ENCODE measurements at regions of chr13 and their contacts with region 1.

Region 1: GRCh38 chr13:75482070-75482819 is at the start of gene TBC1D4:
- DNase-seq: peak; percentile 89 to 91 (median 90)
- ATAC-seq: peak; percentile 89 to 95 (median 90)
- H3K4me3 ChIP-seq: peak within 1 kb of the TSS; percentile 92 to 93 (median 92)
- H3K27ac ChIP-seq: peak within 1 kb of the TSS; percentile 43 to 79 (median 78)
- H3K4me1 ChIP-seq: peaks cover 0 to 14% (median 0%) of the 10 kb centered on the region in 4 donors
- H3K27me3 ChIP-seq: no peaks in the 10 kb centered on the region
- CTCF ChIP-seq: peak; percentile 71 to 88 (median 84)
- POLR2A ChIP-seq: peak; percentile 49
- total RNA-seq, gene TBC1D4: 7.7 to 18.6 (median 10.3) TPM

Region 2: DNA sequence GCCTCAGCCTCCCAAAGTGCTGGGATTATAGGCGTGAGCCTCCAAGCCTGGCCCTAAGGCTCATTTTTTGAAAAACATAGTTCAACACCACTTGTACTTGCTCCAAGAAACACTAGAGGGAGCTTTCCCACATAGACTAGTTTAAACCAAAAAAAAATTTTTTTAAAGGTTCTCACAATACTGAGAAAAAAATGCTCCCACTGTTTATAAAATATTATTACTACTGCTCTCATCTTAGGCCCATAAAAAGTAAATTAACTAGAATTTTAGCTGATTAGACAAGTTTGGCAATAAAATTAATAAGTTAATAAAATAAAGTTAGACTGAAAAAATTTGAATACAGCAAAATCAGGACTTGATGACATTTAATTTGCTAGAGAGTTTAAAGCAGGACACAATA is 109.7 kb before region 1 on chr13:
- intact Hi-C with region 1: loop called (anchors 10 kb)
- DNase-seq: no peak
- ATAC-seq: peak; percentile 79 to 81 (median 80)
- H3K4me3 ChIP-seq: no peak overlapping the region
- H3K27ac ChIP-seq: no peak overlapping the region
- H3K4me1 ChIP-seq: peaks cover 0 to 10% (median 3%) of the 10 kb centered on the region in 4 donors
- H3K27me3 ChIP-seq: no peaks in the 10 kb centered on the region
- CTCF ChIP-seq: peak; percentile 70 to 73 (median 72)
- POLR2A ChIP-seq: no peak

Region 3: DNA sequence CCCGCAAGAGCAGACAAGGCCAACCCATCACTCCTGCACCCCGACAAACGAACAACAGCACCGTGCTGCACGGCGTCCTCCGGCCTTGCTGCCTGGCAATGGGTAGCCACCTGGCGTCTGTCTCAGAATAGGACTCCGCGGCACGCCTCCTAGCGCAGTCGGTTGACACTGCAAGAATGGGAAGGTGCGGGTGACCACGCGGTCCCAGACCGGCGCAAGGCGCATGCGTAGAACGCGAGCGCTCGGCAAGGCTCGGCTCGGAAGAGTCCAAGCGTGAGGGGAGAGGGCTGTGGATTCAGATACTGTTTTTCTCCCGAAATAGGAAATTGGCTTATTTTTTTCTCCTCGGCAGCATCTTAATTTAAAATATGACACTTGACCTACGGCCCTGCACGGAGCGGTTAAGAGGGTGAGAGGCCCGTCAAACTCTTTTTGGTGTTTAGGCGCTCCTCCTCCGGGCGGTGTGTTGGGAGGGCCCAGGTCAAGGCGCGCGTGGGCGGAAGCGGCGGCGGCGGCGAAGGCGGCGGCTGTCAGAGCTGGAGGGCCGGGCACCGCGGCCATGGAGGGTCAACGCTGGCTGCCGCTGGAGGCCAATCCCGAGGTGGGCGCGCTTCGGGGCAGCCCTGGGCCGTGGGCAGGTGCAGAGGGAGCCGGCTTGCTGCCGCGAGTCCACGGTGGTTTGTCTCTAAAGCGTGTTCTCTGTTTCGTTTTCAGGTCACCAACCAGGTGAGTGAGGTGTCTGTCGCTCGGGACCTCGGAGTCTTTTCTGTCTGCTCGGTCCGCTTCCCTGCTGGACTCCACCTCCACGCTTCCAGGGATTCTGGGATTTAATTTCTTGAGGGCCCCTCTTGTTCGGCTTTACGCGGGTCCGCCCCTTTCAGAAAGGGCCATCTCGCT is 67.3 kb after region 1 on chr13 and contains the start of gene UCHL3:
- intact Hi-C with region 1: loop called in 1 of 2 experiments (anchors 10 kb)
- DNase-seq: peak; percentile 97
- ATAC-seq: peak; percentile 95 to 98 (median 97)
- H3K4me3 ChIP-seq: peak within 1 kb of the TSS; percentile 80 to 95 (median 93)
- H3K27ac ChIP-seq: peak within 1 kb of the TSS; percentile 79 to 96 (median 95)
- H3K4me1 ChIP-seq: peaks cover 0 to 11% (median 3%) of the 10 kb centered on the region in 4 donors
- H3K27me3 ChIP-seq: no peaks in the 10 kb centered on the region
- CTCF ChIP-seq: peak; percentile 83 to 96 (median 88)
- POLR2A ChIP-seq: peak; percentile 74
- total RNA-seq, gene UCHL3: 14.8 to 33.9 (median 21.9) TPM

Measured in right lobe of liver (tissue), 6 donors.